Activated T-helper 1 cell treated with anti-CD3 and anti-CD28 coated beads, Interleukin-12 subunit alpha, Interleukin-12 subunit beta, Interleukin-2, Interleukin-4 antibody, amounts not matched to agents 30 ng/mL and 10 ng/mL and 1 ng/mL, durations not matched to agents 14 hours and 24 hours and 36 hours (primary cell): ENCODE measurements at regions of chr18 and their contacts with region 1.

Region 1: DNA sequence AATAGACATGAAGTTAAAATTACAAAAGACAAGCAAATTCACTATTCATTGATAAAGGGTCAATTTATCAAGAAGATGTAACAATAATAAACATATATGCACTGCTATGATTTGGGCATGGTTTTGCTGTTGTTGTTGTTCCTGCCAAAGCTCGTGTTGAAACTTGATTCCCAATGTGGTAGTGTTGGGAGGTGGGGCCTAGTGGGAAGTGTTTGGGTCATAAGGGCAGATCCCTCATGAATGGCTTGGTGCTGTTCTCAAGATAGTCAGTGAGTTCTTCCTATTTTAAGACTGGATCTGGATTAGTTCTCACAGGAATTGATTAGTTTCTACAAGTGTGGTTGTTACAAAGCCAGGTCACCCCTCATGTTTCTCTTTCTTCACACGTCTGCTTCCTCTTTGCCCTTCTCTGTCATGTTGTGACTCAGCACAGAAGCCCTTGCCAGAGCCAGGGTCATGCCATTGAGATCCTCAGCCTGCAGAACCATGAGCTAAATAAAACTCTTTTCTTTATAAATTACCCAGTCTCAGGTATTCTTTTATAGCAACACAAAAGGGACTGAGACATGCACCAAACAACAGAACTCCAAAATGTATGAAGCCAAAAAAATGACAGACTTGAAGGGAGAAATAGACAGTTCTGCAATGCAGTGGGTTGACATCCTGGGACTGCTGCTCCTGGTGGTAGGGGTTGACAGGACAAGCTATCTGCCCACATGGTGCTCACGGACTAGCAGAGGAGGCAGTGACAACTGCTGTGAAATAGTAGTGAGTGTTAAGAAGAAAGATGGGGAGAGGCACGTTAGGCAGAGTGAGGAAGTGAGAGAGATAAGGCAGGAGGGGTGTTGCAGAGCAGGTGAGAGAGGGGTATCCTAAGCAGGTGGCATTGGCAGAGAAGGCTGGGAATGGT is 18.6 kb upstream of the SKA1 start:
- DNase-seq: no peak
- H3K4me3 Mint-ChIP-seq: no peak overlapping the region
- H3K27ac Mint-ChIP-seq: peak overlapping the region; percentile 27
- H3K4me1 Mint-ChIP-seq: peaks cover 14% of the 10 kb centered on the region
- H3K27me3 Mint-ChIP-seq: peaks cover 25% of the 10 kb centered on the region

Region 2: GRCh38 chr18:49510393-49511115 is 845.7 kb before region 1 on chr18:
- intact Hi-C with region 1: loop called (anchors 5 kb)
- DNase-seq: peak; percentile 24
- H3K4me3 Mint-ChIP-seq: no peak overlapping the region
- H3K27ac Mint-ChIP-seq: no peak overlapping the region
- H3K4me1 Mint-ChIP-seq: peaks cover 5% of the 10 kb centered on the region
- H3K27me3 Mint-ChIP-seq: peaks cover 17% of the 10 kb centered on the region

Region 3: DNA sequence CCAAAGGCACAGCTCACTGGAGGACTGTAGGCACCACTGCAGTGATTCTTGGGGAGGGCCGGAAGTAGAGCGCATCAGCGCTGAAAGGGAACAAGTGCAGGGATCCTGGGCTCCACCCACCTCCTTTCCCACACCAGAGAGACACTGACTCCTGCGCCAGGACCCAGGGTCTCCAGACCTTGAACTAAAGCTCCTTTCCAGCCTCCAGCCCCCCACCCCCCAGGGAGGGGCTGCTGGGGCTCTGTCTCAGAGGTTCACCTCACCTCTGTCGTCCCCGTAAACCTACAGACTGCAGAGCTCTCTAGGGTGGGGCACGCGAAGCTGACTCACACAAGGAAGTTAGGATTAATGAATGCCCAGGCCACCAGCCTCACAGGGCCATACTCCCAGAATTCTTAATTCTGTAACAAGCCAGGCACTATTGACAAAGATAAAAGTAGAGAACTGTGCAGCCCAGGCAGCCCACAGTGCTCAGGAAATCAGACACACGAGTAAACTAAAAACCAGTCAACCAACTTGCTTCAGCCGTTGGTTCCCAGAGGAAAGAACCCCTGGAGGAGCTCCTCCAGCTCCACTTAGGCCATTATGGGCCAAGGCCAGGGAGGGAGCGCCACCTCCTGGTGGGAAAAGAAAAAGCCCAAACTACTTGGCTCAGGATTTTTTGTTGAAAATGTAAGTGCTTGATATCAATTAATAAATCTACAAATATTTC is 497.8 kb before region 1 on chr18:
- intact Hi-C with region 1: loop called (anchors 5 kb)
- DNase-seq: peak; percentile 38
- H3K4me3 Mint-ChIP-seq: no peak overlapping the region
- H3K27ac Mint-ChIP-seq: no peak overlapping the region
- H3K4me1 Mint-ChIP-seq: peaks cover 4% of the 10 kb centered on the region
- H3K27me3 Mint-ChIP-seq: no peaks in the 10 kb centered on the region

Region 4: DNA sequence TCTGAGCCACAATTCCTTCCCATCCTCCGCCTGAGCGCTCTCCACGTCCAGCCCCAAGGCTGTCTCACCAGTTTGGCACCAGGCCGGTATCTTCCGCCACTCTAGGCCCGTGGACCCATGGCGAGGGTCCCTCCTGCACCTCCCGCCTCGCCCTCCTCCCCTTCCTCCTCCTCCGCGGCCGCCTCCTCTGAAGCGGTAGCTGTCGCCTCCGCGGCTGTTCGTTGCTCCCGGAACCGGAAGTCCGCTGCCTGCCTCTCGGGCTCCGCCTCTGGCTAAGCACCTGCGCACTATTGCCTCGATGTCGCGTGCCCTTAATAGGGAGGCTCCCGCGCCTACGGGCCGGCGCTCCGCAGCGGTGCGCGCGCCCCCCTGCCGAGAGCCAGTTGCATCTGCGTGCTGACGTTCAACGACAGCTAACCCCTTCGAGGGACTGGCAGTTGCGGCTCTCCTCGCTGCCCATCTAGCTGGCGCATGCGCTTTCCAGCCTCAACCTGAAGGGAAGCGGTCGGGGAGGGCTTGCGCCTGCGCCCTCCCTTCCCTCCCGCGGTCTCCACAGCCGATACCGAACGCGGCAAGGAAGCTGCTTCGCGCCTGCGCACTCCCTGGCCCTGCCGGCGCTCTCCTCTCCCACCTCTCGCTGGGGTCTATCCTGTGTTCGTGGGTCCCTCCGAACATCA is 74.9 kb before region 1 on chr18 and contains the start of gene MBD1:
- intact Hi-C with region 1: loop called (anchors 1 kb)
- DNase-seq: peak; percentile 94
- H3K4me3 Mint-ChIP-seq: peak within 1 kb of the TSS; percentile 91
- H3K27ac Mint-ChIP-seq: peak within 1 kb of the TSS; percentile 87
- H3K4me1 Mint-ChIP-seq: peaks cover 40% of the 10 kb centered on the region
- H3K27me3 Mint-ChIP-seq: no peaks in the 10 kb centered on the region
- total RNA-seq, gene MBD1: 94.8 and 95.2 TPM in 2 replicates

Region 5: DNA sequence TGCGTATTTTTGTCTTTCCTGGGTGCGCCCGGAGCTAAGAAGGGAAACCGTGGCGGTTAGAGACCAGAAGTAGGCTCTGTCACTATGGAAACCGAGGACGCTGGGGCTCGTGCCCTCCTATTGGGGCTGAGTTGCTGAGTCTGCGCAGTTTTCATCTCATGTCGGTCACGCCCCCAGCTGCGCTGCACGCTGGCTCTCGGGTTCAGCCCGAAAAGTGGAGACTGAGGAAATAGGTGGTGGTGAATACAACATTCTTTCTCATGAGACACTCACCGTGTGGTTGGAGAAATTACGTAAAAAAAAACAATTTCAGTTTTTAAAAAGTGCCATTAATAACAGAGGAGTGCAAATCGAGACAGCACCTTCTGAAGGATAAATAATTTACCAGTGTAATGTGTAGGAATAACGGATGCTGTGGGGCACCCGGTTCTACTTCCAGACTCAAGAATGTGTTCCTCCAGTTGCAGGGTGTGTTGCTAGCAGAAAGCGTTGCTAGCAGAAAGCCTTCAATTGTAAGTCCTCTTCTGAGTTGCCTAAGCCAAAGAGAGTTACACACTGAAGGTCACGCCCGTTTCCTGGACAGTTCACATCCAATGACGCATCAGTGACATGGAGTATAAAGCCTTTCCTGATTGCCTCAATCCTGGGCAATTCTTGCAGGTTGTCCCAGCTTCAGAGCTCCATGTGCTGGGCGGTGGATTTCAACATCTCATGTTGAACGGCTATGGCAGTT is 48.4 kb before region 1 on chr18:
- intact Hi-C with region 1: loop called (anchors 1 kb)
- DNase-seq: peak; percentile 85
- H3K4me3 Mint-ChIP-seq: peak overlapping the region; percentile 90
- H3K27ac Mint-ChIP-seq: peak overlapping the region; percentile 57
- H3K4me1 Mint-ChIP-seq: peaks cover 18% of the 10 kb centered on the region
- H3K27me3 Mint-ChIP-seq: peaks cover 27% of the 10 kb centered on the region

Region 6: GRCh38 chr18:50374753-50375391 is 18.6 kb after region 1 on chr18 and contains the start of gene SKA1:
- intact Hi-C with region 1: loop called (anchors 1 kb)
- DNase-seq: peak; percentile 89
- H3K4me3 Mint-ChIP-seq: peak within 1 kb of the TSS; percentile 91
- H3K27ac Mint-ChIP-seq: peak within 1 kb of the TSS; percentile 81
- H3K4me1 Mint-ChIP-seq: peaks cover 23% of the 10 kb centered on the region
- H3K27me3 Mint-ChIP-seq: peaks cover 2% of the 10 kb centered on the region
- total RNA-seq, gene SKA1: 20.7 and 23.3 TPM in 2 replicates

Region 7: DNA sequence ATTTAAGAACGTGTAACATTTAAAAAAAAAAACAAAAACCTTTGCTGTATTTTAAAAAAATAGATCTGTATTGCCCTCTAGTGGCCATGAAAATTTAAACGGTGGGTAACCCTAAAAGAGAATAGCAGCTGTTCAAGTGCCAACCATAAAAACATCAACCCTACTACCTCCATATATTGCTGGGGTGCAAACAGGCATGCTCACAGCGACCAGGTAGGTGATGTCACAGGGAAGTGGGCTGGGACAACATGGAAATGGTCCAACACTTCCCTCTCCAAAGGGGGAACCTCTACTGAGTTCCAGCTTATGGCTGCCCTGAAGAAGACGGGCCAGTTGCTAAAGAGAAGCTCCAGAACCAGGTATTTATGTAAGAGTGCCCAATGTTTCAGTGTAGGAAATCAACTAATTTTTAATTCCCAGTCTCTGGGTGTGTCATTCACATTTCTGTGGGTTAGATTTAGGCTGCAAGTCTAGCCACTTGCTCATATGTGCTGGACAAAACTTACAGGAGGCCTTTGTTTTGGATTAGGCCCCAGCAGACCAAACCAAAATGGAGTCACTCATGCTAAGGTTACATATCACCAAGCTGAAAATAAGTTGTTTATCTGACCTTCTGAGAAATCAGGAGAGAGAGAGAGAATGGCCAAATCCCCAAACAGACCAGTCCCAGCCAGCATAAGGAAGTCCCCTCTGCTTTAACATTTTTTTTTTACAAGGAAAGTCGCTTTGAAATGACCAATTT is 73.1 kb after region 1 on chr18:
- intact Hi-C with region 1: loop called (anchors 1 kb)
- DNase-seq: no peak
- H3K4me3 Mint-ChIP-seq: no peak overlapping the region
- H3K27ac Mint-ChIP-seq: no peak overlapping the region
- H3K4me1 Mint-ChIP-seq: no peaks in the 10 kb centered on the region
- H3K27me3 Mint-ChIP-seq: peaks cover 14% of the 10 kb centered on the region